Heart left ventricle (tissue), 16 donors: ENCODE measurements at regions of chr10 and their contacts with region 1.

Region 1: DNA sequence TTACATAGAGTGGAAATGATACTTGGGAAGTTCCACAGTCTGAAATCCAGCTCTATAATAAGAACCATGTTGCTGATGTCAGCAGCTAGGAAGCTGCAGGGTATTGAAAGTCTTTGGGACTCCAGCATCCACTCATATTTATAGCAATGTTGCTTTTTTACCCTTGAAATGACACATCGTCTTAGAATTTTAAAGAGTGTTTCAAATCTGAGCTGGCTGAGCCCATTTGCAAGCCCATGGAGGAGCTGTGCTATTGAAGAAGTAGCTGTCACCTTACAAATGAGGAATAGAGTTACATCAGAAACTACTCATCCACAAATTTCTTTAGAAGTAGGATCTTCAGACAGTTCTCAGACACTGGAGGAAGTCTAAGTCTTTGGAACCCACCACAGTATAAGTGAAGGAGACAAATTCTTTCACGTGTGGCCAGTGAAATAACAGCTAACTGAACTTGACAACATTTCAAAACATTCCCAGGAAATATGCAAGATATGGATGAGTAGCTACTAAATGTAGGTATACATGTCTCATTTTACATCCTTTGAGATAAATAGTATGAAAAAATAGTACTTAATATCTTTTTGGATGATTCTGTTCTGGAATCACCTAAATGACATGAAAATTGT is 203.6 kb downstream of the ZNF365 start:
- DNase-seq: no peak
- ATAC-seq: no peak
- H3K4me3 ChIP-seq: no peak overlapping the region
- H3K27ac ChIP-seq: no peak overlapping the region
- H3K4me1 ChIP-seq: peaks cover 0 to 14% (median 0%) of the 10 kb centered on the region in 12 donors
- H3K27me3 ChIP-seq: peaks cover 0 to 8% (median 0%) of the 10 kb centered on the region in 9 donors
- CTCF ChIP-seq: no peak
- POLR2A ChIP-seq: no peak

Region 2: GRCh38 chr10:62443866-62444265 is 133.9 kb before region 1 on chr10:
- intact Hi-C with region 1: loop called in 1 of 10 experiments (anchors 10 kb)
- DNase-seq: no peak
- ATAC-seq: no peak
- H3K4me3 ChIP-seq: no peak overlapping the region
- H3K27ac ChIP-seq: no peak overlapping the region
- H3K4me1 ChIP-seq: no peaks in the 10 kb centered on the region
- H3K27me3 ChIP-seq: no peaks in the 10 kb centered on the region
- CTCF ChIP-seq: no peak
- POLR2A ChIP-seq: no peak

Region 3: GRCh38 chr10:62637249-62638061 is 59.7 kb after region 1 on chr10:
- intact Hi-C with region 1: no loop called
- DNase-seq: peak in 2 of 5 donors; percentile 29 to 36
- ATAC-seq: peak; percentile 40 to 70 (median 54)
- H3K4me3 ChIP-seq: peak overlapping the region in 9 of 12 donors; percentile 15 to 38 (median 22)
- H3K27ac ChIP-seq: peak overlapping the region; percentile 6 to 93 (median 49)
- H3K4me1 ChIP-seq: peaks cover 0 to 83% (median 15%) of the 10 kb centered on the region in 12 donors
- H3K27me3 ChIP-seq: no peaks in the 10 kb centered on the region
- CTCF ChIP-seq: no peak
- POLR2A ChIP-seq: no peak

Region 4: GRCh38 chr10:62826273-62826672 is 248.5 kb after region 1 on chr10:
- intact Hi-C with region 1: no loop called
- DNase-seq: no peak
- ATAC-seq: no peak
- H3K4me3 ChIP-seq: no peak overlapping the region
- H3K27ac ChIP-seq: no peak overlapping the region
- H3K4me1 ChIP-seq: peaks cover 0 to 12% (median 0%) of the 10 kb centered on the region in 12 donors
- H3K27me3 ChIP-seq: no peaks in the 10 kb centered on the region
- CTCF ChIP-seq: no peak
- POLR2A ChIP-seq: no peak

Region 5: GRCh38 chr10:63166742-63167258 is 589.0 kb after region 1 on chr10:
- intact Hi-C with region 1: no loop called
- DNase-seq: peak in 1 of 5 donors; percentile 32
- ATAC-seq: peak; percentile 47 to 72 (median 68)
- H3K4me3 ChIP-seq: no peak overlapping the region
- H3K27ac ChIP-seq: peak overlapping the region in 1 of 12 donors; percentile 0
- H3K4me1 ChIP-seq: peaks cover 0 to 37% (median 17%) of the 10 kb centered on the region in 12 donors
- H3K27me3 ChIP-seq: no peaks in the 10 kb centered on the region
- CTCF ChIP-seq: peak; percentile 64 to 92 (median 82)
- POLR2A ChIP-seq: no peak